ENCODE measurements at regions of chr2 and their contacts with region 1.

Region 1: GRCh38 chr2:10302479-10303180 is at the start of gene HPCAL1:
- DNase-seq: peak; percentile 90
- ATAC-seq: peak; percentile 81
- H3K4me3 ChIP-seq: peak within 1 kb of the TSS; percentile 67 to 78 (median 76)
- H3K4me3 Mint-ChIP-seq: peak within 1 kb of the TSS; percentile 99
- H3K27ac ChIP-seq: peak within 1 kb of the TSS; percentile 71 to 77
- H3K27ac Mint-ChIP-seq: peak within 1 kb of the TSS; percentile 88
- H3K4me1 ChIP-seq: peaks cover 39 to 51% of the 10 kb centered on the region in 2 donors
- H3K4me1 Mint-ChIP-seq: peaks cover 60% of the 10 kb centered on the region
- H3K27me3 ChIP-seq: no peaks in the 10 kb centered on the region
- H3K27me3 Mint-ChIP-seq: no peaks in the 10 kb centered on the region
- CTCF ChIP-seq: peak; percentile 80
- total RNA-seq, gene HPCAL1: 60.3 and 64.1 TPM in 2 replicates

Region 2: GRCh38 chr2:10122386-10123280 is 180.0 kb before region 1 on chr2 and contains the start of gene RRM2:
- CTCF ChIA-PET with region 1: interaction called, 11 read pairs
- POLR2A ChIA-PET with region 1: no interaction called
- intact Hi-C with region 1: loop called (anchors 1 kb)
- DNase-seq: peak; percentile 91
- ATAC-seq: peak; percentile 82
- H3K4me3 ChIP-seq: peak within 1 kb of the TSS in 4 of 5 experiments; percentile 42 to 77 (median 54)
- H3K4me3 Mint-ChIP-seq: peak within 1 kb of the TSS; percentile 98
- H3K27ac ChIP-seq: no peak within 1 kb of the TSS
- H3K27ac Mint-ChIP-seq: peak within 1 kb of the TSS; percentile 59
- H3K4me1 ChIP-seq: peaks cover 29 to 32% of the 10 kb centered on the region in 2 donors
- H3K4me1 Mint-ChIP-seq: peaks cover 30% of the 10 kb centered on the region
- H3K27me3 ChIP-seq: peaks cover 0 to 17% (median 8%) of the 10 kb centered on the region in 4 experiments
- H3K27me3 Mint-ChIP-seq: peaks cover 10% of the 10 kb centered on the region
- CTCF ChIP-seq: no peak
- total RNA-seq, gene RRM2: 1.2 and 1.3 TPM in 2 replicates

Region 3: DNA sequence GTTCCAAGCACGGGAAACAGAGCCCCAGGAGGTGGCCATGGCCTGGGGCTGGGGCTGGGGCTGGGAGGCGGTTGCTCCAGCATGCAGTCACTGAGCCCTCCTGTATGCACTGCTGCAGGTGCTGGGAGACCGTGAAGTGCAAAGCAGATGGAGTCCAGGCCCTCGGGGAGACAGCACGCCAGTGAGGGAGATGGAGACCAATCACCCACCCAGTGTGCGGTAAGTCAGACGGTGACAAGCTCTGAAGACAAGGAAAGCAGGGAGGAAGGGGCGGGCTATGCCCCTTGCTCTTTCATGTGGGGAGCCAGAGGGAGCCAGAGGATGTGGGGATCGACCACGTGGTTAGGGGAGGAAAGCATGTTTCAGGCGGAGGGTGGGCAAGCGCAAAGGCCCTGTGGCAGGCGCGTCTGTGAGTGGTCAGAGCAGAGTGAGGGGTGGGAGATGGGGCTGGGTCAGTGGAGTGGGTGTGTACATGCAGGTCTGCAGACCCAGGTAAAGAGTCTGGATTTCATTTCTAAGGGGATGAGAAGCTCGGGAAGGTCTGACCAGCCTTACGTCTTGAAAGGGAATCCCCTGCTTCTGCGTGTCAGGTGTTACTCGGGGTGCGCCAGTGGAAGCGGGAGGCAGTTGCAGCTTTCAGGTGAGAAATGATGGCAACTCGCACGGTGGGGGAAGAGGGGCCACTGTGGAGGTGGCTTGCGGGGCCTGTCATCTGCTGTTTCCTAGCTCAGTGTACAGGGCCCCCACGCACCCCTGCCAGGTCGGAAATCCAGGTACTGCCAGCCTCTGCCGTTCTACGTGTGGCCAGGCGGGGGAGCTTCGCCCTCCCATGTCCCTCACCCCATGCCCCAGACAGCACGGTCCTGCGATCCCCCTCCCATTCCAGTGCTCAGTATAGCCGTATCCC is 160.6 kb before region 1 on chr2:
- CTCF ChIA-PET with region 1: interaction called, 6 read pairs
- POLR2A ChIA-PET with region 1: no interaction called
- intact Hi-C with region 1: loop called (anchors 5 kb)
- DNase-seq: peak; percentile 53
- ATAC-seq: peak; percentile 88
- H3K4me3 ChIP-seq: no peak overlapping the region
- H3K4me3 Mint-ChIP-seq: no peak overlapping the region
- H3K27ac ChIP-seq: no peak overlapping the region
- H3K27ac Mint-ChIP-seq: no peak overlapping the region
- H3K4me1 ChIP-seq: no peaks in the 10 kb centered on the region
- H3K4me1 Mint-ChIP-seq: no peaks in the 10 kb centered on the region
- H3K27me3 ChIP-seq: no peaks in the 10 kb centered on the region
- H3K27me3 Mint-ChIP-seq: no peaks in the 10 kb centered on the region
- CTCF ChIP-seq: peak; percentile 37

Region 4: DNA sequence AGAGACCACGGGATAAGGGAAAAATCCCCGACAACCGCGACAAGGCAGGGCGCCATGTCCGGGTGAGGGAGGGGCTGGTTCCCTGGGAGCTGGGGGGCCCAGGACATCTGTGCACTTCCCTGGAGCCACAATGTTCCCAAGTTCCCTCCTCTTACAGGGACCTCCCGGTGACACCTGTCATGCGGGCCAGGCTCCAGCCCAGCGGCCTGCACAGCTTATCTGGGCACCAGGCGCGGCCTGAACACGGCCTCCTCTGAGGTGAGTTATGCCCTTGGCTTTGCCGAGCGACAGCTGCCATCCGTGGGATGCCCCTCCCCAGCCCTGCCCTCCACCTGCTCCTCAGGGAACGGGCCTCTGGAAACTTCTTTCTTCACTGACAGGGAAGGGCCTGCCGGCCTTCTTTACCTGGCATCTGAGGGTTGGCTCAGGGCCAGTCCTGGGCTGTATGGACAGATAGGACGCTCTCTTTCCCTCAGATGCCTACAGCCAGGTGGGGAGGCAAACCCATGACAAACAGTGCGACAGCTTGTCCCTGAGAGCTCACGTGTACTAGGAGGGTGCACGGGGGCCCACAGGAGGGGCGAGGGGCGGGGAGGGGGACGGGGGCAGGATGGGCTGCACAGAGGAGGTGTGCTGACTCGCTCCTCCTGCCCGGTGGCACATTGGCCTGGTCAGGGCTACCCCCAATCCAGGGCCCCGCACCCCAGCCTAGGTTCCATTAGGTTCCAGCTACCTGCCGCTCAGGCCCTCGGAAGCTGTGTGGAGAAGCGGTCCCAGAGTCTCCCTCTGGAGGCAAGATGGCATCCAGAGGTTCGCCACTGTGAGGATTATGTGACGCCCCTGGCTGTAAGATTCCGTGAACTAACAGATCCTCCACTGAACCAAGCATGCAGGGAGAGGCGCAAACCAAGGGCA is 34.8 kb before region 1 on chr2:
- CTCF ChIA-PET with region 1: interaction called, 11 read pairs
- POLR2A ChIA-PET with region 1: no interaction called
- intact Hi-C with region 1: loop called (anchors 2 kb)
- DNase-seq: no peak
- ATAC-seq: no peak
- H3K4me3 ChIP-seq: no peak overlapping the region
- H3K4me3 Mint-ChIP-seq: no peak overlapping the region
- H3K27ac ChIP-seq: no peak overlapping the region
- H3K27ac Mint-ChIP-seq: no peak overlapping the region
- H3K4me1 ChIP-seq: peaks cover 3 to 8% of the 10 kb centered on the region in 2 donors
- H3K4me1 Mint-ChIP-seq: peaks cover 3% of the 10 kb centered on the region
- H3K27me3 ChIP-seq: no peaks in the 10 kb centered on the region
- H3K27me3 Mint-ChIP-seq: peaks cover 4% of the 10 kb centered on the region
- CTCF ChIP-seq: no peak

Region 5: GRCh38 chr2:10331027-10331701 is 28.5 kb after region 1 on chr2:
- CTCF ChIA-PET with region 1: interaction called, 20 read pairs
- POLR2A ChIA-PET with region 1: interaction called, 4 read pairs
- intact Hi-C with region 1: loop called (anchors 2 kb)
- DNase-seq: peak; percentile 65
- ATAC-seq: peak; percentile 38
- H3K4me3 ChIP-seq: peak overlapping the region; percentile 3 to 57 (median 52)
- H3K4me3 Mint-ChIP-seq: peak overlapping the region; percentile 70
- H3K27ac ChIP-seq: peak overlapping the region; percentile 58 to 82
- H3K27ac Mint-ChIP-seq: peak overlapping the region; percentile 81
- H3K4me1 ChIP-seq: peaks cover 55 to 69% of the 10 kb centered on the region in 2 donors
- H3K4me1 Mint-ChIP-seq: peaks cover 74% of the 10 kb centered on the region
- H3K27me3 ChIP-seq: no peaks in the 10 kb centered on the region
- H3K27me3 Mint-ChIP-seq: no peaks in the 10 kb centered on the region
- CTCF ChIP-seq: no peak

Region 6: DNA sequence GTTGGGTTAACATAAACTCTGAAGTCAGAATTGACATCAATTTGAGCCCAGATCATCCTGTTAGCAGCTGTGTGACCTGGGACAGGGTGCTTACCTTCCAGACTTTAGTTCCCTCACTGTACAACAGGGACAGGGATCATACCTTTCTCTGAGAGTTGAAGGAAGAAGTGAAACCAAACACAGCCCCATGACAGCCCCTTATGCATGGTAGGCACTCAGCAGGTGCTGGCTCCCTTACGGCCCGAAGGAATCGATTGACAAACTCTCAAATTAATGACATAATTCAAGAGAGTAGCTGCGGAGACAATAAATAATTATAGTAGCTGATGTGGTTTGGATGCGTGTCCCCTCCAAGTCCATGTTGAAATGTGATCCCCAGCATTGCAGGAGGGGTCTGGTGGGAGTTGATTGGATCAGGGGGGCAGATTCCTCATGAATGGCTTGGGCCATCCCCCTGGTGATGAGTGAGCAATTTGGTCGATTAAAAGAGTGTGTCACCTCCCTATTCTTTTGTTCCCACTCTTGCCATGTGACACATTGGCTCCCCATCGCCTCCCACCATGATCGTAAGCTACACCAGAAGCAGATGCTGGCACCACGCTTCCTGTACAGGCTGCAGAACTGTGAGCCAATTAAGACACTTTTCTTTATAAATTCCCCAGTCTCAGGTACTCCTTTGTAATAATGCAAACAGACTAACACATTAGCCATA is 73.1 kb after region 1 on chr2:
- CTCF ChIA-PET with region 1: interaction called, 61 read pairs
- POLR2A ChIA-PET with region 1: interaction called, 24 read pairs
- intact Hi-C with region 1: loop called (anchors 1 kb)
- DNase-seq: peak; percentile 84
- ATAC-seq: peak; percentile 62
- H3K4me3 ChIP-seq: peak overlapping the region in 3 of 5 experiments; percentile 14 to 47 (median 17)
- H3K4me3 Mint-ChIP-seq: peak overlapping the region; percentile 71
- H3K27ac ChIP-seq: peak overlapping the region; percentile 73 to 82
- H3K27ac Mint-ChIP-seq: peak overlapping the region; percentile 94
- H3K4me1 ChIP-seq: peaks cover 64 to 74% of the 10 kb centered on the region in 2 donors
- H3K4me1 Mint-ChIP-seq: peaks cover 79% of the 10 kb centered on the region
- H3K27me3 ChIP-seq: no peaks in the 10 kb centered on the region
- H3K27me3 Mint-ChIP-seq: no peaks in the 10 kb centered on the region
- CTCF ChIP-seq: no peak

Region 7: DNA sequence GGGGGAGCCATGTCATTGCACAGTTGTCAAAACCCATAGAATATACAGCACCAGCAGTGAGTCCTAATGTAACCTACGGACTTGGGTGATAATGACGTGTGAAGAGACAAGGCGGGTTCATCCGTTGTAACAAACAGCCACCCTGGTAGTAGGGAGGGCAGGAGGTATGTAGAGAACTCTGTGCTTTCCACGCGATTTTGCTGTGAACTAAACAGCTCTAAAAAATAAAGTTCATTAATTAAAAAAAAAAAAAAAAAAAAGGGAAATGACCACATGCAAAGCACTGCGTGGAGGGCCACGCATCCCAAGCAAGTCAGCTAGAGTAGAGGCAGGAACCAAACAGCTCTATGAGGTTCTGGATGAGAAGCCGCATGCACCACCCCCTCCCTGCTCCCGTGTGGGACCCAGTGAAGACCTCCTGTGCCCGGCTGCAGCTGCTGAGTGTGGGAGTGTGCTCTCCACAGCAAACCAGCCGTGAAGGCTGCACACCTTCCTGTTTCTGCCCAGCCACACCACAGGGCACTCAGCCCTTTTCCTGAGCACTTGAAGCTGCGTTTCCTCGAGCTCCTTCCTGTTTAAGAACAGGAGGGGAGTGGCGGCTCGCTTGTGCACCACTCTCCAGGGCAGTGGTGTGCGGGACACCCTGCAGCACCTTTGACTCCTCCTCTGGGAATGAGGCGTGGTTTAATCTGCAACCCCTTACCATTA is 79.9 kb after region 1 on chr2:
- CTCF ChIA-PET with region 1: interaction called, 61 read pairs
- POLR2A ChIA-PET with region 1: interaction called, 37 read pairs
- intact Hi-C with region 1: loop called (anchors 1 kb)
- DNase-seq: peak; percentile 82
- ATAC-seq: peak; percentile 69
- H3K4me3 ChIP-seq: peak overlapping the region; percentile 12 to 68 (median 49)
- H3K4me3 Mint-ChIP-seq: peak overlapping the region; percentile 64
- H3K27ac ChIP-seq: peak overlapping the region; percentile 68 to 76
- H3K27ac Mint-ChIP-seq: peak overlapping the region; percentile 81
- H3K4me1 ChIP-seq: peaks cover 67 to 96% of the 10 kb centered on the region in 2 donors
- H3K4me1 Mint-ChIP-seq: peaks cover 86% of the 10 kb centered on the region
- H3K27me3 ChIP-seq: no peaks in the 10 kb centered on the region
- H3K27me3 Mint-ChIP-seq: no peaks in the 10 kb centered on the region
- CTCF ChIP-seq: no peak